ENCODE measurements at regions of chr17 and their contacts with region 1.

Region 1: GRCh38 chr17:75271233-75271954 is 363 bp upstream of the MIF4GD start:
- DNase-seq: peak; percentile 95

Region 2: DNA sequence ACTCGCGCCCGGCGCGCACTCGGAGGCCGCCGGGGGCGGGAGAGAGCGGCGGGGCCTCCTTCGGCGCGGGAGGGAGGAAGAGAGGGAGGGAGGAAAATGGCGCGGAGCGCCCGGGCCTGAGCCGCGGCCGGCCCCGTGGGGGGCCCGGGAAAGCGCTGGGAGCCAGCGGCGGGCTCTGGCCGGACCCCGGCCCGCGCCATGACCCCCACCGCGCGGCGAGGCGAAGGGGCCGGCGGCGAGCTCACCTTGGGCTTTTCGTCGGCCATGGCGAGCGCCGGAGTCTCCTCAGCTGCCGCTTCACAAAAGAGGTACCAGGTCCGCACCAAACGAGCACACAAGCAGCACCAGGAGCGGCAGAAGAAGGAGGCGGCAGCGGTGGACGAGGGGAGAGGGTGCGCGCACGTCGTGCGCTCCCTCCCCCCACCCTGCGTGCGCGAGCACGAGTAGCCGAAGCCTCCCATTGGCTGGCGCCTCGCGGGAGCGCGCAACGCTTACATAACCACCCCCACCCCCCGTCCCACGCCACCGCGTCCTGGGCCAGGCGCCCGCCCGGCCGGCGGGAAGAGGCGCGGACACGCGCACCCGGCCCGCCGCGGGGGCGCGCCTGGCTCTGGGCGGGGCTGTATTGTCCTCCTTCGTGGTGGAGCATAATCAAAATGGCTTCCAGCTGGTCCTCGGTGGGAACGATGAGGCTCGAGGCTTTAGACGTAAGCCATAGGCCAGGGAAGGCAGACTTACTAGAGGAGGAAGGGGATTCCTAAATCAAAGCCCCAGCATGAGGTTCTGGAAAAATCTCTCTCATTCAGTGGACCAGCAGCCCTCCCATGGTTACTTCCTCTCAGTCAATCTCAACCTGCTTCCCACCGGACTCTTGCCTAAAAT is 88.6 kb before region 1 on chr17 and contains the start of gene SUMO2:
- CTCF ChIA-PET with region 1: no interaction called
- POLR2A ChIA-PET with region 1: interaction called, 10 read pairs
- DNase-seq: peak; percentile 99

Region 3: DNA sequence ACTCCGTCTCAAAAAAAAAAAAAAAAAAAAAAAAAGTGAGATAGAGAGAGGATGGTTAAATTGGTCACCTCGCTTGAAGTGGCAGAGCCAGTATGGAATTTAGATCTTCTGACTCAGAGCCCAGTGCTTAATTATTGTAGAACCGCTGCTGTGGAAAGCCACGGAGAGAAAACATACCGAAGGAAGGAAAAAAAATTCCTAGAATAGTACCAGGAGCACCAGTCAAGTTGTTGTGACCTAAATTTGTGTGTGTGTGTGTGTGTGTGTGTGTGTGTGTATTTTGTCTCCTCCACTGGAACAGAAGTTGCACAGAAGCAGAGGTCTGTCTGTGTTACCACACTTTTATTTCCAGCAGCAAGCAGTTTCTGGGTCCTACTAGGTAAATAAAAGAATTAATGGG is 76.5 kb before region 1 on chr17:
- CTCF ChIA-PET with region 1: no interaction called
- POLR2A ChIA-PET with region 1: no interaction called
- DNase-seq: no peak

Region 4: DNA sequence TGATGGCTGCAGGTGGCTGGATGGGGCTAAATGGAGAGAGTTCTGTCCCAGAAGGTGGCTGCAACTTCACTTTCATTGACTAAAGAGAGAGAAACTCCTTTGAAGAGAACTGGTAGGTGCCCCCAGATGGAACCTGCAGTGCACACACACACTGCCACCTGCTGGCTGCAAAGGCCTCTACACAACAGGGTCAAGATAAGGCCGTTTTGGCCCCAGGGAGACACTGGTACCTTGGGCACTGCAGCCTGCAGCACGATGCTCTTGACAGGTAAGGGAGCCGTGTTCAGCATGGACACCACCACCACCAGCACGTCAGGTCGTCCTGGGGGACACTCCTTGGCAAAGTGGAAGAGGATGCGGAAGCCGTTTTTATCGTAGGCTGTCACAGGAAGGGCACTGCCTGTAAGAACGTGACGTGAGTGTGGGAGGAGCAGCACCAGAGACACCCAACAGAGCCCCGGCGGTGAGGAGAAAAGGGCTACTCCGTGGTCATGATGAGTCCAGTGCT is 32.7 kb before region 1 on chr17:
- CTCF ChIA-PET with region 1: interaction called, 16 read pairs
- POLR2A ChIA-PET with region 1: interaction called, 14 read pairs
- DNase-seq: peak; percentile 86

Region 5: GRCh38 chr17:75289115-75289831 is 17.9 kb after region 1 on chr17 and contains the start of gene SLC25A19:
- CTCF ChIA-PET with region 1: interaction called, 28 read pairs
- POLR2A ChIA-PET with region 1: interaction called, 82 read pairs
- DNase-seq: peak; percentile 99

Region 6: GRCh38 chr17:75393523-75394331 is 122.3 kb after region 1 on chr17:
- CTCF ChIA-PET with region 1: interaction called, 6 read pairs
- POLR2A ChIA-PET with region 1: interaction called, 15 read pairs
- DNase-seq: peak; percentile 97

Region 7: DNA sequence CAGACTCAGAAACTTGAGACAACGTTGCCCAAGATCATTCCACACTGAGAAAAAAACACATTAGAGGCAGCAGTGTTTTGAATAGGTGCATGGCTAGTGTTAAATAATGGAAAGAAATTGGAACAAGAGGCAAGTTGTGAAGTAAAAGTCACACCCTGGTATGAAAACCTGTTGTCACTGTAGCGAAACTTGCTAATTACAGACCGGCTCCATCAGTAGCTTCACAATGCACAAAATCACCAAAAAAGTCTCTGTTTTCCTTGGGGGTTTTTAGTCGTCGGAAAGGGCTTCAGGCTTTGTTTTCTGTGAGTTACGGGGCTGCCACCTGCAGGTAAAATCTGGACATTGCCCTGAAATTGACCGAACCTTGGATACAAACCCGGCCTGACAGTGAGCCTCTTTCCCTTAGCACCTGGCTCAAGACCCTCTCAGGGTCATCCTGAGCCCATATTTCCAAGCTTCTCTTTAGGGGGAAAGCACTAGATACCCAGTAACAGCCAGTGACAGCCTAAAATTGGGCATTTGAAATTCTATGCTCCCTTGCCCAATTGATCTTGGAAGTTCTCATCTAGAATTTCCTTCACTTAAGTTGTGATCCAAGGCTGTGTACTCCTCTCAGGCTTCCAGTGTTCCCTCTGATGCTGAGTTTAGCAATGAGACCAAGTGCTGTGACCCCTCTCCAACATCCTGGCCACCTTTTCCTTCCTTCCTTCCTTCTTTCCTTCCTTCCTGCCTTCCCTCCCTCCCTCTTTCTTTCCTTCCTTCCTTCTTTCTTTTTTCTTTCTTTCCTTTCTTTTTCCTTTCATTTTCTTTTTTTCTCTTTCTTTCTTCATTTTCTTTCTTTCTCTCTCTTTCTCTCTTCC is 141.3 kb after region 1 on chr17:
- CTCF ChIA-PET with region 1: interaction called, 13 read pairs
- POLR2A ChIA-PET with region 1: interaction called, 25 read pairs
- DNase-seq: peak; percentile 76